RWPE1 (cell line): ENCODE measurements at regions of chr14 and their contacts with region 1.

Region 1: DNA sequence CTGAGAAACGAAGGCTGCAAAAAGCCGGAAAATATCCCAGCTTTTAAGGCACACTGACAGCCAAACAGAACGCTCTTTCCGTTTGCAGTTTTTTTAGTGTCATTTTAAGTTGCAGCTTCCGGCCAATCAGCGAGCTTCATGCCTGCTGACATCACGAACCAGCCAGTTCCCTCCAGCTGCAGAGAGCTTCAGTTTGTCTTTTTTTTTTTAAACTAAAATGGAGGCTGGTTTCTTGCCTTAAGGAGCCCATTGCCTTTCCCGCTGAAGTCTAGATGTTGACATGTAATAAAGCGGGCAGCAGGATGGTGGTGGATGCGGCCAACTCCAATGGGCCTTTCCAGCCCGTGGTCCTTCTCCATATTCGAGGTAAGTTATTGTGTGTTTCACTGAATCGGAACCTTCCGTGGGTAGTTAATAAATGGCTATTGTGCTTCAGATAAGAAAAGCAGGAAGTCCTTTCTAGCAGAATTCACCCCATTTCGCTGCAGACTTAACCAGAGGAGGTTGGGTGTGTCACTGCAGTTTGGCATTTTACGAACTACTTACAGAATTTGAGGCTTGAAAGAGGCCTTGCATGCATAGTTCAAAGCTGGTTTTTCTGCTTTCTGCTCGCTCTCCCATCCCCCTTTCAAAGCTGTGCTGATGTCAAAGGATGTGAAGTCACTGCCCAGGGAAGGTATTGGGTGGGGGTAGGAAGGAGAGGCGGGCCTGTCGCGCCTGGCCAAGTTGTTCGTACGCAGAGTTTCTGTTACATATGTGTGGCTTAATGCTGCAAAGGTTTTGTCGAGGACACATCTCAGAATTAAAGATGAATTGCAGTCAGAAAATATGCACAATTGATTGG is 48.4 kb downstream of the PPP2R5C start:
- DNase-seq: peak; percentile 88
- H3K27ac ChIP-seq: peak overlapping the region; percentile 91
- CTCF ChIP-seq: no peak

Region 2: GRCh38 chr14:101774006-101774795 is 35.7 kb before region 1 on chr14:
- CTCF ChIA-PET with region 1: interaction called, 10 read pairs
- POLR2A ChIA-PET with region 1: no interaction called
- DNase-seq: no peak
- H3K27ac ChIP-seq: no peak overlapping the region
- CTCF ChIP-seq: no peak